MCF 10A (cell line): ENCODE measurements at regions of chr19 and their contacts with region 1.

Region 1: DNA sequence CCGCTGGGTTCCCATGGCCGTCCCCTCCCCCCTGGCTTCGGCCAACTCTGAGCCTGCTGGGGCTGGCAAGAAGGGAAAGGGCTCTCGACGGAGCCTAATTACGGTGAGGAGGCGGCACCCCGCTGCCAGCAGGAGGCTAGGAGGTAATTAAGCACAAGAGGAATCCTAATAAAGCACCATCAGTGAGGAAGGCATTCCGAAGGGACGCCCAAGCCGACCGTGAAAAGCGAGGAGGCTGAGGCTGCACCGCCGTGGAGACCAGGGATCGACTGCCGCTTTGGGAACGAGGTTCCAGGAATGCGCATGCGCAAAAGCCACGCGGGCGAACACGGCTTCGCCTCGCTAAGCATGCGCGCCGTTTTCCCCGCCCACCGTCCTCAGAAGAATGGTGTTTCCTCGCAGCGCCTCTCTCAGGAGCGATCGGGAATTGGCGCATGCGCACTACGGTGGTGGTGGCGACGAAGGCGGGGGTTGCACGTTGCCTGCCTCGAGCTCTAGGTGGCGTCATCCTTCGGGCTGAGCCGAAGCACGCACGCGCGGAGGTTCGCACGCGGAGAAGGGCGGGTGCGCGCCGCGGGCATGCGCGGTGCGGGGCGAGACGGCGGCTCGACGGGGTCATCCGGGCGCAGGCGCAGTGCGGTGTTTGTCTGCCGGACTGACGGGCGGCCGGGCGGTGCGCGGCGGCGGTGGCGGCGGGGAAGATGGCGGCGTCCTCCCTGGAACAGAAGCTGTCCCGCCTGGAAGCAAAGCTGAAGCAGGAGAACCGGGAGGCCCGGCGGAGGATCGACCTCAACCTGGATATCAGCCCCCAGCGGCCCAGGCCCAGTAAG is at the start of gene MAP2K7:
- DNase-seq: peak; percentile 100
- H3K4me3 Mint-ChIP-seq: peak within 1 kb of the TSS; percentile 97
- H3K27ac Mint-ChIP-seq: peak within 1 kb of the TSS; percentile 98
- H3K4me1 Mint-ChIP-seq: peaks cover 32% of the 10 kb centered on the region
- H3K27me3 Mint-ChIP-seq: no peaks in the 10 kb centered on the region
- CTCF ChIP-seq: peak; percentile 42
- total RNA-seq, gene MAP2K7: 30.5 and 36.3 TPM in 2 replicates

Region 2: DNA sequence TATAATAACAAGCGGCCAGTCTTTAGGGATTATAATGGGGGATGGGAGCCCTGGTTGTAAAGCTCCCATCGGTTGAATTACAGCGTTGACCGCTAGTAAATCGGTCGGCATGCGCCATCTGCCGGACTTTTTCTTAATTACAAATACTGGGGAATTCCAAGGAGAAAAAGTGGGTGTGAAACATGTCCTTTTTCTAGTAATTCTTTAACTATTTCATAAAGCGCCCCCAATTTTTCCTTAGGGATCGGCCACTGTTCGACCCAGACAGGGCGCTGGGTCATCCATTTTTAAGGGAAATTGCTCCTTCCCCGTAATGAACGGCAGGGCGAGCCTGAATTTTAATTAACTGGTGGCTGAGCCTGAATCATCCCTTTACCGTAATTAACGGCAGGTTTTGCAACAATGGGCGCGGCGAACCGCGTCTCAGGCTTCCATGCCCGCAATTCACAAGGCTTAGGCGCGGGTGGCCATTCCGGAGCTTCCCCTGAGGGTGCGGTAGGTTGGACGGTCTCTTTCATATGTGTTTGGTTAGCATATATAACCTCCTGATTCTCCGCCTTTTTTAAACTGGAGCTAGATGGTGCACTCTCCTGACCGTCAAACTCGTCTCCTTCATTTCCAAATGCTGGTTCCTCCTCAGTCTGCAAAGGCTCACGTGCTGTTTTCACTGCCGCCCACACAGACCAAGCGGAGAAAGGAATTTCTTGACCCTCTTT is 103.7 kb before region 1 on chr19:
- CTCF ChIA-PET with region 1: no interaction called
- POLR2A ChIA-PET with region 1: interaction called, 12 read pairs
- intact Hi-C with region 1: no loop called
- DNase-seq: peak; percentile 82
- H3K4me3 Mint-ChIP-seq: peak overlapping the region; percentile 22
- H3K27ac Mint-ChIP-seq: no peak overlapping the region
- H3K4me1 Mint-ChIP-seq: no peaks in the 10 kb centered on the region
- H3K27me3 Mint-ChIP-seq: no peaks in the 10 kb centered on the region
- CTCF ChIP-seq: peak; percentile 61

Region 3: DNA sequence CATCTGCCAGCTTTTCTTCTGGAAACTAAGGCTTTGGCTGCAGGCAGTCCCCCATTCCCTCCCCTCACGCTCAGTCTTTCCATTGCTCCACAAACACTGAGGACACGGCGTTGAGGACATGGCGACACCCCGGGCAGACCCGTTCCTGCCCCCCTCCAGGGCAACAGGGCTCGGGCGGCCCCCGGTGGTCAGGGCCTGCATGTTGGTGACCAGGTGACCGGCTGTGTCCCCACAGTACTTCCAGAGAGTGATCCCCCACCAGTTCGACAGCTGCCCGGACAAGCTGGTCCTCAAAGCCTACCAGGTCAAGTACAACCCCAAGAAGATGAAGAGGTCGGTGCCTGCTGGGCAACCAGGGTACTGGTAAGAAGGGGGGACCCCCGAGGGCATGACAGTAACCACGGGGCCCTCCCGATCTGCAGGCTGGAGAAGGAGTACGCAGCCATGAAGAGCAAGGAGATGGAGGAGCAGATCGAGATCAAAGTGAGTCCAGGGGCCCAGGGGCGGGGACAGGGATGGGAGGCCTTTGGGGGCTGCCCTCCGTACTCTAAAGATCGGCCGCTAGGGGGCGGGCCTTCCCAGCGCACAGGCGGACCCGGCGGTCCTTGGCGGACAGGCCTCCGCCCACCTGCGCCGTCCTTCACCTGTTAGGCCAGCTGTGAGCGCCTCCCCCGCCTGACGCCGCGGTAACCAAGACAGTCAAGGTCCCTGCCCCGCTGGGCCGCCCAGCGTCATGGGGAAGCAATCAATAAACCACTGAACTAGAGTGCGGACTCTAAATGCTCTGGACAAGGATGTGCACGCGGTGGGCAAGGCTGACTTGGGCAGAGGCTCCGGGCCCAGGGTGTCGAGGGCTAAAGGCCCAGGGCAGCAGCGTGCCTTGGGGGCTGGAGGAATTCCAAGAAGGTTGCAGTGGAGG is 50.3 kb before region 1 on chr19:
- CTCF ChIA-PET with region 1: interaction called, 18 read pairs
- POLR2A ChIA-PET with region 1: interaction called, 5 read pairs
- intact Hi-C with region 1: loop called (anchors 5 kb)
- DNase-seq: peak; percentile 82
- H3K4me3 Mint-ChIP-seq: no peak overlapping the region
- H3K27ac Mint-ChIP-seq: no peak overlapping the region
- H3K4me1 Mint-ChIP-seq: peaks cover 8% of the 10 kb centered on the region
- H3K27me3 Mint-ChIP-seq: no peaks in the 10 kb centered on the region
- CTCF ChIP-seq: peak; percentile 96

Region 4: DNA sequence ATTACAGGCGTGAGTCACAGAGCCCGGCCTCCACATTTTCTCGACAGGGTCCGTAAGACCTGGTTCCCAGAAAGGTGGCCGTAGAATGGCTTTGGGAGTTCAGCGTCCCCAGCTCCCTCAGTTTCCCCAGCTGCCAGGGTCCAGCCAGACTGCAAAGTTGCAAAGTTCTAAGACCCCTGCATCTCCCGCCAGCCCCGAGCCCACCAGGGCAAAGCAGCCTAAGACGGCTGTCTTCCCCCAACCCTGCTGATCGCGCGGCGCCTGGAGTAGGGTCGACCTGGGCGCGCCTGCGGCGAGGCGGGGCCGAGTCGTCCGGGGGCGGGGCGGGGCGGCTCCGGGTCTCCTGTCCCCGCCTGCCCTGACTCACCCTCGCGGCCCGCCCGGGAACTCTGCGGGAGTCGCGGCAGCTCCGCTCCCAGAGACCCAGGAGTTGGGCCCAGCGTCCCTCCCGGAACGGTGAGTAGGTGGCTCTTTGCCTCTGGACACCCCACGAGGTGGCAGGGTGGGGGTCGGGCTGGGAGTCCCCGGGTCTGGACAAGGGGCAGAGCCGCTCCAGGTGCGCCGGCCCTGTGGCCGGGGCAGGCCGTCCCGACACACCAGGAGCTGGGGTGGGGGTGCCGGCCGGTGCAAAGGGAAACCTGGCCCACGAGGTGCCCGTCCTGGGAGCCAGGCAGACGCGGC is 15.2 kb before region 1 on chr19 and contains the start of gene LRRC8E:
- CTCF ChIA-PET with region 1: interaction called, 5 read pairs
- POLR2A ChIA-PET with region 1: interaction called, 53 read pairs
- intact Hi-C with region 1: no loop called
- DNase-seq: peak; percentile 83
- H3K4me3 Mint-ChIP-seq: peak within 1 kb of the TSS; percentile 72
- H3K27ac Mint-ChIP-seq: no peak within 1 kb of the TSS
- H3K4me1 Mint-ChIP-seq: peaks cover 6% of the 10 kb centered on the region
- H3K27me3 Mint-ChIP-seq: no peaks in the 10 kb centered on the region
- CTCF ChIP-seq: no peak
- total RNA-seq, gene LRRC8E: 10.3 and 11.8 TPM in 2 replicates

Region 5: GRCh38 chr19:7928736-7929701 is 25.6 kb after region 1 on chr19:
- CTCF ChIA-PET with region 1: interaction called, 3 read pairs
- POLR2A ChIA-PET with region 1: interaction called, 15 read pairs
- intact Hi-C with region 1: no loop called
- DNase-seq: peak; percentile 82
- H3K4me3 Mint-ChIP-seq: peak overlapping the region; percentile 62
- H3K27ac Mint-ChIP-seq: peak overlapping the region; percentile 93
- H3K4me1 Mint-ChIP-seq: peaks cover 13% of the 10 kb centered on the region
- H3K27me3 Mint-ChIP-seq: no peaks in the 10 kb centered on the region
- CTCF ChIP-seq: peak; percentile 34

Region 6: DNA sequence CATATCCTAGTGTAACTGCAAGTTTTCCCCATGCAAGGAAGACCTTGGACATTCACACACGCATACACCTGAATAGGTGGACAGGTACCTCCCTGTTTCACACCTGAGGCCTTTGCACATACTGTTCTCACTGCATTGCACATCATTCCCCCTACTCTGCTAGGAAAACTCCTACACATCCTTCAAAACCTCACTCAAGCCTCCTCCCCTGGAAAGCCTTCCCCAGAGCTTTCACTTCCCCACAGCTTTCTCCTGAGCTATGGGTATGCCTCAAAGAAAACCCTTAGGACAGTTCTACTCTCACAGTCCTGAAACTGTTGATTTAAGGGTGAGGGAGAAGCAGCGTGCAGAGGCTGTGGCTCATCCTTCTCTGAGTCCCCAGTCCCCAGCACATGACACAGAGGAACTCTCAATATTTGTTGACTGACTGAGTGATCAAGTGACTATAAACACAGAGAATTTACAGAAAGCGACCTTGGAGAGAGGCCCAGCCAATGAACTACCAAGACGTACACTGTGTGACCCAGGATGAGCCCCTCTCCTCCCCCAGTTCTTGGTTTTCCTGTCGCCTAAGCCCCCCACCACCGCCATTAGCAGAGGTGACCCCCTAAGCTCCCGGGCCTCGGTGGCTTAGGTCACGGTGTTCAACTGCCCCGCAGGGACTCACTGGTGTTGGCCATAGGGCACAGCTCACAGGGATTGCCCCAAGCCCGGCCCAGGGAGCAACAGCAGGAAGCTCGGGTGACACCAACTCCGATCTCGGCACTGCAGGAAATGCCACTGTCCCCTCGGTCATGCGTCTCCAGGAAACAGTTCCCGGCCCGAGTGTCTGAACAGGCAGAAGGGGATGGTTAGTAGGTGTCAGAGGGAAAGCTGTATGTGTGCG is 205.3 kb after region 1 on chr19:
- CTCF ChIA-PET with region 1: no interaction called
- POLR2A ChIA-PET with region 1: no interaction called
- intact Hi-C with region 1: no loop called
- DNase-seq: no peak
- H3K4me3 Mint-ChIP-seq: no peak overlapping the region
- H3K27ac Mint-ChIP-seq: no peak overlapping the region
- H3K4me1 Mint-ChIP-seq: peaks cover 6% of the 10 kb centered on the region
- H3K27me3 Mint-ChIP-seq: no peaks in the 10 kb centered on the region
- CTCF ChIP-seq: no peak